ENCODE measurements at regions of chr9 and their contacts with region 1.

Region 1: GRCh38 chr9:130172858-130173665 is 858 bp downstream of the NCS1 start:
- DNase-seq: no peak
- H3K4me3 ChIP-seq: peak overlapping the region; percentile 57
- H3K27me3 ChIP-seq: no peaks in the 10 kb centered on the region
- CTCF ChIP-seq: no peak

Region 2: DNA sequence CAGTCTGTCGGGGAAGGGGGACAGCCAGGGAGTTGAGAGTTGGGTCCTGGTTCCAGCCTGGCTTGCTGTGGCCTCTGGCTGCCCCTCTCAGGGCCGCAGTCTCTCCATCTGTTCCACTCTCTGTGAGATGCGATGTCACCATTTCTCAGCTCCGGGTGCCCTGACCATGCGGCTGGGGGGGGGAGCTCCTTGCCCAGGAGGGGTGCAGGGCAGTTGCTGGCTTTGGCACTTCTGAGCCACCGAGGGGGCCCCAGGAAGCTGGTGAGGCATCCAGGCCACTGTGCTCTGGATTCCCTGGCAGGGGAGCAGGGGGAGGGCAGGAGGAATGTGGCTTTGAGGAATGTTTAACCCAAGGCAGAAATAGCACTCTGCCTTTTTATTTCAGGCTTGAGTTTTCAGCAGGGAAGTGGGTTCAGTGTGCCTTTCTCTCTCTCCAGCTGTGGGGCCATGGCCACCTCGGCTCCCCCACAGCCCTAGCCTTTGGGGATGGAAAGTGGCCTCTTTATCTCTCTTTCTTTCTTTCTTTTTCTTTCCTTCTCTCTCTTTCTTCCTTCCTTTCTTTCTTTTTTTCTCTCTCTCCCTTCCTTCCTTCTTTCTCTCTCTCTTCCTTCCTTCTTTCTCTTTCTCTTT is 10.2 kb after region 1 on chr9:
- CTCF ChIA-PET with region 1: interaction called, 5 read pairs
- POLR2A ChIA-PET with region 1: interaction called, 10 read pairs
- DNase-seq: peak; percentile 38
- H3K4me3 ChIP-seq: no peak overlapping the region
- H3K27me3 ChIP-seq: no peaks in the 10 kb centered on the region
- CTCF ChIP-seq: no peak

Region 3: DNA sequence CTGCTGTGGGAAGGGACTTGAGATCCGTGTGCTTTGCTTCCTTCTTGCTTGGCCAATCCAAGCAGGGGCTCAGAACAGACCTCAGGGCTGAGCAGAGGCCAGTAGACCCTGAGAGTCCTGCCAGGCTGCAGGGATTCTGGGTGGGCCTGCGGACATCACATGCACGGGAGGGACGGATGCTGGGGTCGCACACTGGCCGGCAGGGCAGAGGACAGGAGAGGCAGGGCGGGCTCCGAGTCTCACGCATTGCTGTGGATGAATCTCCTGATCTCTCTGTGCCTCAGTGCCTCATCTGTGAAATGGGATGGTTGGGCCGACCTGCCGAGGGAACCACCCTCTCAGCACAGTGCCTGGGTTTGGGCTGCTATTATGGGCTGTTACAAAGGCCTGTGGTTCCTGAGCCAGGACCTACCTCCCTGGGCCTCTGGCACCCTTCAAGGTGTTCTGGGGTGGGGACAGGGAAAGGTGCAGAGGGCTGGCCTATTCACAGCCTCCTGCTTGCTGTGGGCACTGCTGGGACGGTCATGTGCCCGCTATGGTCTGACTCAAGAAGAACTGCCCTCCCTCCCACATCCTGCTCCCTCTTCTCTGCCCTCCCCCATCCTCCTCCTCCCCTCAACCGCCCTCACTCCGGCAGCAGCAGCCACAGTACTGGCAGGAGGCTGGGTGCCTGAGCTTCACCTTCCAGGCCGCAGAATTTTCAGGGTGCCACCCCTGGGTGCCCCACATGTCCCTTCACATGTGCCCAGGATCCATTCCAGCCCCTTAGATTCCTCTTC is 42.5 kb after region 1 on chr9:
- CTCF ChIA-PET with region 1: no interaction called
- POLR2A ChIA-PET with region 1: no interaction called
- DNase-seq: no peak
- H3K4me3 ChIP-seq: no peak overlapping the region
- H3K27me3 ChIP-seq: no peaks in the 10 kb centered on the region
- CTCF ChIP-seq: no peak

Measured in BJ (cell line).